ENCODE measurements at regions of chr12 and their contacts with region 1.

Region 1: GRCh38 chr12:31631784-31632183 is 27.7 kb upstream of the ETFBKMT start:
- DNase-seq: no peak
- H3K4me3 ChIP-seq: no peak overlapping the region
- H3K27ac ChIP-seq: no peak overlapping the region
- H3K4me1 ChIP-seq: peaks cover 19% of the 10 kb centered on the region
- H3K27me3 ChIP-seq: no peaks in the 10 kb centered on the region
- CTCF ChIP-seq: no peak
- POLR2A ChIP-seq: no peak

Region 2: DNA sequence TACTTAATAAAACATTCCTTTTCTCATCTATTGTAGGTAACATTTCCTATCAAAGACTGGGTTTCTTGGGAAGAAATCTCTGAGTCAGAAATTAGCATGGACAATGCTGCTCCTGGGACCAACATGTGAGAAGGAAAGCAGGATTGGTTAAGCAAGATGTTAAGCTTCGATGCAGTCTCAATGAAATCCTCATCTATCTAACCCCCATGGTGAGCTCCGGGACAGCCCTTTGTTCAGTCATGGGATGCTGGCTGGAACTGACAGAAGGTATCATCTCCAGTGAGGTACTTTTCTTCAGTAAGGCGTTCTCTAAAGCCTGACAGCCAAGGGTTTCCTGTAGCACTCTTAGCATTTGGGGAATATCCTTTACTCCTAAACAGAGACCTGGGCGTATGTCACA is 223.0 kb before region 1 on chr12:
- intact Hi-C with region 1: loop called (anchors 2 kb)
- DNase-seq: no peak
- H3K4me3 ChIP-seq: no peak overlapping the region
- H3K27ac ChIP-seq: no peak overlapping the region
- H3K4me1 ChIP-seq: no peaks in the 10 kb centered on the region
- H3K27me3 ChIP-seq: no peaks in the 10 kb centered on the region
- CTCF ChIP-seq: no peak
- POLR2A ChIP-seq: no peak